Activated naive CD4-positive, alpha-beta T cell treated with anti-CD3 and anti-CD28 coated beads for 36 hours (primary cell): ENCODE measurements at regions of chr15 and their contacts with region 1.

Region 1: GRCh38 chr15:94230956-94231722 is at the start of gene MCTP2:
- DNase-seq: peak; percentile 87
- H3K4me3 Mint-ChIP-seq: peak within 1 kb of the TSS; percentile 87
- H3K27ac Mint-ChIP-seq: peak within 1 kb of the TSS; percentile 84
- H3K4me1 Mint-ChIP-seq: peaks cover 48% of the 10 kb centered on the region
- H3K27me3 Mint-ChIP-seq: no peaks in the 10 kb centered on the region
- total RNA-seq, gene MCTP2: 33.7 to 35.1 TPM

Region 2: DNA sequence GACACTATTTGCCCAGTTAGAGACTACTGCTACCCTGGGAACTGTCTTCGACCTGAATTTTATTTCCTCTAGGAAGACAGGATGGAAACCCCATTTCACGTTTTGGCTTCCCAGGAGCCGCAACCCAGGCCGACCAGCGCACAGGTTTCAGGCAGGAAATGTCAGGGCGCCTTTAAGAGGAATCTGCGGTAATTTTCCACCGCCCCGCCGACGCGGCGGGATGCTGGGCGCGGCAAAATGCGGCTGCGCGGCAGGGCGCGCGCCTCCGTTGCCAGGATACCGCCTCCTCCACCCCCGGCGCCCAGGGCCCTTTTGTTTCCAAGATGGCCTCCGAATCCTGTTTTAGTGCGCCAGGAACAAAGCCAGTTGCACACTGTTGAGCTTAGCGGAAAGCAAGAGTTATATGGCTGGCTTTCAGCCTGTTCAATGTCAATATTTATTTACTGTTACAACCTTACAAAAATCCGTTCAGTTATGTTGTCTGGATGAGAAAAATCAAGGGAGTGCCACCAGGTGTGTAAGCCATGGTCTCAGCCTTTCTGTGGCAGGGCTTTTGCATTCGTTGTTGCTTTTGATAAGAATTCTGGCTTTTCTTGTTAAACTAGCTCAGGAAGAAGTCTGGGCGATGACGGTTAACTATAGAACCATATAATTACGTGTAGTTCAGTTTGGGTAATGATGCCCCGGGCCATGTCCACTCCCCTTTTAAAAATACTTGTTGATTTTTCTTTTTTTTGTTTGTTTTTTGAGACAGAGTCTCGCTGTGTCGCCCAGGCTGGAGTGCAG is 1410.7 kb before region 1 on chr15:
- CTCF ChIA-PET with region 1: no interaction called
- intact Hi-C with region 1: loop called (anchors 5 kb)
- DNase-seq: peak; percentile 91
- H3K4me3 Mint-ChIP-seq: peak overlapping the region; percentile 79
- H3K27ac Mint-ChIP-seq: peak overlapping the region; percentile 98
- H3K4me1 Mint-ChIP-seq: peaks cover 73% of the 10 kb centered on the region
- H3K27me3 Mint-ChIP-seq: no peaks in the 10 kb centered on the region

Region 3: DNA sequence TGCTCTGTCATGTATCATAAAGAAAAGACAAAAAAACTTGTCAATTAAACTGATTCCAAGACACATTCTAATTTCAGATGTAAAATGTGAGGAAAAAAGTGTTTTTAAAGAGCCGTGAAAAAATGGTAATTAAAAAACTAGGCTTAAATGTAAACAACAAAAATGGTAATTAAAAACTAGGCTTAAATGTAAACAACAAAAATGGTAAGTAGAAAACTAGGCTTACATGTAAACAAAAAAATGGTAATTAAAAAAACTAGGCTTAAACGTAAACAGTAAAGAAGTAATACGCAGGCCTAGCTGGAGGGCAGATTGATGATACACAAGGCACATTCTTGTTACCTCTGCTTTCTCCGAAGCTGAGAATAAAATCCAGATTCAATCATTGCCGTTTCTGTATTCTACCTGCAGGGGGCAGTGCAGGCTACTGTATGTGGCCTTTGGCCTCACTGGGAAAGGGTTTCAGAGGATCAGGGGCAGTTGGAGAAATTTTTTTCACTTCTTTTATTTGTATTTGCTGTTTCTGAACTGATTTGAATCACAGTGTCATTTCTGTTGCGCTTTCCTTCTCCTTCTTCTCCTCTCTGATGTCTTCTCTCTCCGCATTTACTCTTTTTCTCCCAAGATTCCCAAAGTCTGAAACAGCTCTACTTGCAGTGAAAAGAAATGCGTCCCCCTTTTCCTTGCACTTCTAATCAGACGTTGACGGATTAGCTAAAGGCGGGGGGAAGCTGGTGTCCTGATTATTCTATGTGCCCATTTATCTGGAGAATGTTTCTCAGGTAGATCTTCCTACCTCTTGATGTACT is 66.9 kb before region 1 on chr15:
- CTCF ChIA-PET with region 1: interaction called, 32 read pairs
- intact Hi-C with region 1: loop called (anchors 2 kb)
- DNase-seq: peak; percentile 76
- H3K4me3 Mint-ChIP-seq: no peak overlapping the region
- H3K27ac Mint-ChIP-seq: no peak overlapping the region
- H3K4me1 Mint-ChIP-seq: no peaks in the 10 kb centered on the region
- H3K27me3 Mint-ChIP-seq: no peaks in the 10 kb centered on the region

Region 4: DNA sequence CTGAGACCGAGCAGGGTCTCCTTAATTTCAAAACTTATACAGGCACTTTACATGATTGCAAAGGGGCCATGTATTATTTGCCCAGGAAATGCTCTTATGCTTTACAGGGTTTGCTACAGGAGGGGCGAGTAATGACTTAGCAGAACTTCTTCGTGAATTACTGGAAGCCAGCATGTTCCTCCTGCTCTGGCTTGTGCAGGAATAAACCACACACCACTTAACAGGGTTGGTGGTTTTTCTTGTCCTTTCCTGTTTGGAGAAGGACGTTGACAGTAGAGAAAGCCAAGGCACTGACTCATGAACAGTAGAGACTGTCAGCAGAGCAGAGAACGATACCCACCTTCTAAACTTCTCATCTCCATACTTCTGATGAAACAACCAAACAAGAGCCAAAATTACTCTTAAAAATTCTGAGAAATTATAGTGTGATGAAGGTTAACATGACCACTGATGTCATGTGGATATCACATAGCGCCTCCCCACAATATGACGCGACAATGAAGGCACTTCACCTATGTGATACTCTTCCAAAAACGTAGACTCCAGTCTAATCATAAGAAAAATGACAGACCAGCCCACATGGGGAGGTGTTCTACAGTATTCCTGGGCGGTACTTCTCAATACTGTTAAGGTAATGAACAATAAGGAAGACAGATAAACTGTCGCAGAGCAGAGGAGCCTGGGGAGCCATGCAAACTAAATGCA is 24.5 kb before region 1 on chr15:
- CTCF ChIA-PET with region 1: no interaction called
- intact Hi-C with region 1: loop called (anchors 1 kb)
- DNase-seq: peak; percentile 70
- H3K4me3 Mint-ChIP-seq: no peak overlapping the region
- H3K27ac Mint-ChIP-seq: peak overlapping the region; percentile 69
- H3K4me1 Mint-ChIP-seq: peaks cover 15% of the 10 kb centered on the region
- H3K27me3 Mint-ChIP-seq: peaks cover 24% of the 10 kb centered on the region

Region 5: GRCh38 chr15:94287794-94288246 is 56.7 kb after region 1 on chr15:
- CTCF ChIA-PET with region 1: interaction called, 12 read pairs
- intact Hi-C with region 1: no loop called
- DNase-seq: peak; percentile 71
- H3K4me3 Mint-ChIP-seq: no peak overlapping the region
- H3K27ac Mint-ChIP-seq: no peak overlapping the region
- H3K4me1 Mint-ChIP-seq: peaks cover 37% of the 10 kb centered on the region
- H3K27me3 Mint-ChIP-seq: peaks cover 3% of the 10 kb centered on the region

Region 6: GRCh38 chr15:94324117-94324826 is 93.1 kb after region 1 on chr15:
- CTCF ChIA-PET with region 1: interaction called, 16 read pairs
- intact Hi-C with region 1: loop called (anchors 1 kb)
- DNase-seq: peak; percentile 73
- H3K4me3 Mint-ChIP-seq: no peak overlapping the region
- H3K27ac Mint-ChIP-seq: no peak overlapping the region
- H3K4me1 Mint-ChIP-seq: peaks cover 7% of the 10 kb centered on the region
- H3K27me3 Mint-ChIP-seq: no peaks in the 10 kb centered on the region

Region 7: DNA sequence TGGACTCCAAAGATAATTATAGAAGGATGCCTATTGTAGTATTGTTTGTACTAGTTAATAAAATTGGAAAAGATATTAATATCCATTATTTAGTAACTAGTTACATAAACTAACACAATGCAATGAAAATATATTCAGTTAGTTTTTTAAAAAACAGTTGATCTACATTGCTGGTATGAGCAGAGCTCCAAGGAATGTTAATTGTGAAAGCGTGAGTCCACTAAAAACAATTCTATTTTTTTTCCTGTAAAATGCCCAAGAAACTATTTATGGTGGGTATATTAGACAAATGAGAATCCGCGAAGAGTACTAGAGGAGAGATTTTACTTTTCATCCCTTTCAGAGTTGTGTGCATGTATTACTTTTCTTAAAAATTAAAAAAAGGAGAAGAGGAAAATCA is 104.5 kb after region 1 on chr15:
- CTCF ChIA-PET with region 1: no interaction called
- intact Hi-C with region 1: no loop called
- DNase-seq: no peak
- H3K4me3 Mint-ChIP-seq: no peak overlapping the region
- H3K27ac Mint-ChIP-seq: no peak overlapping the region
- H3K4me1 Mint-ChIP-seq: no peaks in the 10 kb centered on the region
- H3K27me3 Mint-ChIP-seq: no peaks in the 10 kb centered on the region

Region 8: DNA sequence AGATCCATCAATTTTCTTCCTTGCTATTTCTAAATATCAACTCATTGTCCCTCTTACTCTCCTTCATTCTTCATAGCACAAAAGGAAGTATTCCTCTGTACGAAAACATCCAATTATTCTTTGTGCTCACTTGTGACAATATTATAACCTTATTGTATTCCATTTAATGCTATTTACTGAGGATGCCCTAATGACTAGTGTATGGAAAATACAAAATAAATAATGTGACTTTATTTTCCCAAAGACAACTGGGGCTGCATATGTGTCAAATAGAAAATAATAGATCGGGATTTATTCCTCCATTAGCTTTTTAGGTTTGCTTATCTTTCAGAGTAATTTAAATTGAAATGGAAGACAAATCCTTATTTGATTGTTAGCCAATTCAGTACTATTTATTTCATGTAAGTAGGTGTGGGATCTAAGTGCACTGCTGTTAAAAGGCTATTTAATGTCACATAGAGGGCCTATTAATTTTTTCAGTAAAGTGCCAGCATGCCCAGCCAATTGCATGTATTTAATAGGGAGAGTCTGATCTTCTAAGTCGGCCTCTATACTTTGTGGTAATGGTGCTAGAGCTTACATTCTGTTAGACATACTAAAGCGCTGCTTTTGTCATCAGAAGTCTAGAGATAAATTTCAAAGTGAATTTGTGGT is 330.0 kb after region 1 on chr15:
- CTCF ChIA-PET with region 1: no interaction called
- intact Hi-C with region 1: no loop called
- DNase-seq: no peak
- H3K4me3 Mint-ChIP-seq: no peak overlapping the region
- H3K27ac Mint-ChIP-seq: no peak overlapping the region
- H3K4me1 Mint-ChIP-seq: no peaks in the 10 kb centered on the region
- H3K27me3 Mint-ChIP-seq: peaks cover 12% of the 10 kb centered on the region